ENCODE measurements at regions of chr5 and their contacts with region 1.

Region 1: GRCh38 chr5:96344678-96345577 is 88.1 kb downstream of the PCSK1 start:
- DNase-seq: no peak
- ATAC-seq: peak; percentile 93 to 97
- H3K4me3 ChIP-seq: no peak overlapping the region
- H3K27ac ChIP-seq: no peak overlapping the region
- H3K4me1 ChIP-seq: peaks cover under 1 to 7% of the 10 kb centered on the region in 2 donors
- H3K27me3 ChIP-seq: no peaks in the 10 kb centered on the region
- CTCF ChIP-seq: peak; percentile 35 to 63 (median 59)
- POLR2A ChIP-seq: no peak

Region 2: DNA sequence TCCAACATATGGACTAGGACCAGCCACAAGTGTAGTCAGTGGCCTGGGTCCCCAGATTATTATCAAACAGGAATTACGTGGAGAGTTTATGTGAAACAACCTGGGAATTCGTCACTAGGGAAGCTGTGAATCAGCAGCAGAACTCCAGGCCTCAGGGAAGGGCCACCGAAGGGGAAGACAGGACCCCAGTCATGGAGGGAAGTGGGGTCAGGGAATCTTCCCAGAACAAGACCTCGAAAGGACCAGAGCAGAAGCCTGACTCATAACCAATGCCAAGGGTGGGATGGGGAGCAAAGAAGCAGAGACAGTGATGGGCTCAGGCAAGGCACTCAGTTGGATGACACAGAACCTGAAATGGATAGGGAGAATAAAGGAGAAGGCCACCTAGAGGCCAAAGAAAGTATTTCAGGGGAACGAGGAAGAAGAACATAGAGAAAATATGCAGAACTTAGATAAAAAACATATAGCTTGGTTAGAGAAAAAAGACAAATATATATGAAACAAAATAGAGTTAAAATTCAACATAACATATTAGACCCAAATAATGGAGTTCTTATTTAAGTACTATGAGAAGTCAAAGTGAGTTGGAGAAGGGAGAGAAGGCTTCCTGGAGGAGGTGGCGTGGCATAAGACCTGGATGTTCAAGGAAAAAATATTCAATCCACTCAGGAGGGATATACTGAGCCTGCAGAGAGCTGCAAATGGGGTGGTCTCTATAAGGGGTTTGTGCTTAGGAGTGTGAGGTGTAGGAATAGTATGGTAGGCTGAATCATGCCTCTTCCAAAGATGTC is 250.6 kb after region 1 on chr5:
- in situ Hi-C with region 1: loop called (anchors 5 kb)
- intact Hi-C with region 1: no loop called
- DNase-seq: no peak
- ATAC-seq: no peak
- H3K4me3 ChIP-seq: no peak overlapping the region
- H3K27ac ChIP-seq: no peak overlapping the region
- H3K4me1 ChIP-seq: no peaks in the 10 kb centered on the region
- H3K27me3 ChIP-seq: no peaks in the 10 kb centered on the region
- CTCF ChIP-seq: peak in 1 of 5 experiments; percentile 33
- POLR2A ChIP-seq: no peak

Measured in gastrocnemius medialis (tissue), 4 donors.